Activated CD8-positive, alpha-beta memory T cell treated with anti-CD3 and anti-CD28 coated beads, Interleukin-2, amount 10 ng/mL, durations not matched to agents 7 days and 5 days (primary cell): ENCODE measurements at regions of chr20 and their contacts with region 1.

Region 1: GRCh38 chr20:47379433-47380150 is 23.1 kb upstream of the ZMYND8 start:
- DNase-seq: no peak
- ATAC-seq: no peak
- H3K4me3 Mint-ChIP-seq: no peak overlapping the region
- H3K27ac Mint-ChIP-seq: peak overlapping the region; percentile 55
- H3K4me1 Mint-ChIP-seq: peaks cover 37% of the 10 kb centered on the region
- H3K27me3 Mint-ChIP-seq: no peaks in the 10 kb centered on the region

Region 2: GRCh38 chr20:47196091-47197081 is 183.2 kb before region 1 on chr20:
- CTCF ChIA-PET with region 1: interaction called, 130 read pairs
- DNase-seq: peak; percentile 85
- ATAC-seq: peak; percentile 90
- H3K4me3 Mint-ChIP-seq: peak overlapping the region; percentile 13
- H3K27ac Mint-ChIP-seq: no peak overlapping the region
- H3K4me1 Mint-ChIP-seq: peaks cover 10% of the 10 kb centered on the region
- H3K27me3 Mint-ChIP-seq: peaks cover 7% of the 10 kb centered on the region

Region 3: DNA sequence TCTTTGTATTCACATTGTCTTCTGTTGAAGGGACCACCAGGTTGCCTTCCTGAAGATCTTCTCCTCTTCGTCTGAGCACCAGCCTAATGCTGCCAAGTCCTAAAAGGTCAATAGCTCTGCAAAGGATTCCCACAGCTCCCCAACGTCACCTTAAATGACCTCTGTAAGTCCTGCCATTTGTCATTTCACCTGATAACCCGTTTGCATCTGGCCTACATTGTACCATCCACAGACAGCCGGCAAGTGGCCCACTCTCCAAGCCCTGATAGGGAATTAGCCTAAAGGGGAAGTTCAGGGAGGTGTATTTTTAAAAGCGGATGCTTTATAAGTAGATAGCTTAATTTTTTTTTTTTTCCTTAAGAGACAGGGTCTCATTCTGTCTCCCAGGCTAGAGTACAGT is 150.9 kb before region 1 on chr20:
- CTCF ChIA-PET with region 1: interaction called, 18 read pairs
- DNase-seq: no peak
- ATAC-seq: no peak
- H3K4me3 Mint-ChIP-seq: no peak overlapping the region
- H3K27ac Mint-ChIP-seq: no peak overlapping the region
- H3K4me1 Mint-ChIP-seq: no peaks in the 10 kb centered on the region
- H3K27me3 Mint-ChIP-seq: no peaks in the 10 kb centered on the region

Region 4: GRCh38 chr20:47290008-47290407 is 89.6 kb before region 1 on chr20:
- CTCF ChIA-PET with region 1: interaction called, 13 read pairs
- DNase-seq: no peak
- ATAC-seq: no peak
- H3K4me3 Mint-ChIP-seq: no peak overlapping the region
- H3K27ac Mint-ChIP-seq: no peak overlapping the region
- H3K4me1 Mint-ChIP-seq: peaks cover 7% of the 10 kb centered on the region
- H3K27me3 Mint-ChIP-seq: no peaks in the 10 kb centered on the region

Region 5: GRCh38 chr20:47326658-47327268 is 52.8 kb before region 1 on chr20:
- CTCF ChIA-PET with region 1: interaction called, 10 read pairs
- DNase-seq: no peak
- ATAC-seq: no peak
- H3K4me3 Mint-ChIP-seq: no peak overlapping the region
- H3K27ac Mint-ChIP-seq: no peak overlapping the region
- H3K4me1 Mint-ChIP-seq: peaks cover 10% of the 10 kb centered on the region
- H3K27me3 Mint-ChIP-seq: no peaks in the 10 kb centered on the region

Region 6: GRCh38 chr20:47411161-47411560 is 31.6 kb after region 1 on chr20:
- CTCF ChIA-PET with region 1: interaction called, 29 read pairs
- DNase-seq: no peak
- ATAC-seq: no peak
- H3K4me3 Mint-ChIP-seq: no peak overlapping the region
- H3K27ac Mint-ChIP-seq: no peak overlapping the region
- H3K4me1 Mint-ChIP-seq: peaks cover 36% of the 10 kb centered on the region
- H3K27me3 Mint-ChIP-seq: no peaks in the 10 kb centered on the region

Region 7: GRCh38 chr20:47466704-47467434 is 87.3 kb after region 1 on chr20:
- CTCF ChIA-PET with region 1: no interaction called
- DNase-seq: no peak
- ATAC-seq: no peak
- H3K4me3 Mint-ChIP-seq: no peak overlapping the region
- H3K27ac Mint-ChIP-seq: no peak overlapping the region
- H3K4me1 Mint-ChIP-seq: peaks cover 3% of the 10 kb centered on the region
- H3K27me3 Mint-ChIP-seq: no peaks in the 10 kb centered on the region